ENCODE measurements at regions of chr3 and their contacts with region 1.

Region 1: GRCh38 chr3:188220988-188221818 is 67.2 kb downstream of the LPP start:
- DNase-seq: peak; percentile 31
- ATAC-seq: no peak
- H3K4me3 ChIP-seq: no peak overlapping the region
- H3K27ac ChIP-seq: no peak overlapping the region
- H3K4me1 ChIP-seq: no peaks in the 10 kb centered on the region
- H3K27me3 ChIP-seq: no peaks in the 10 kb centered on the region
- CTCF ChIP-seq: no peak

Region 2: GRCh38 chr3:187919048-187919447 is 302.2 kb before region 1 on chr3:
- CTCF ChIA-PET with region 1: no interaction called
- POLR2A ChIA-PET with region 1: no interaction called
- intact Hi-C with region 1: loop called (anchors 10 kb)
- DNase-seq: no peak
- ATAC-seq: no peak
- H3K4me3 ChIP-seq: no peak overlapping the region
- H3K27ac ChIP-seq: no peak overlapping the region
- H3K4me1 ChIP-seq: peaks cover 50% of the 10 kb centered on the region
- H3K27me3 ChIP-seq: no peaks in the 10 kb centered on the region
- CTCF ChIP-seq: no peak

Measured in PC-3 (cell line).